ENCODE measurements at regions of chr10 and their contacts with region 1.

Region 1: DNA sequence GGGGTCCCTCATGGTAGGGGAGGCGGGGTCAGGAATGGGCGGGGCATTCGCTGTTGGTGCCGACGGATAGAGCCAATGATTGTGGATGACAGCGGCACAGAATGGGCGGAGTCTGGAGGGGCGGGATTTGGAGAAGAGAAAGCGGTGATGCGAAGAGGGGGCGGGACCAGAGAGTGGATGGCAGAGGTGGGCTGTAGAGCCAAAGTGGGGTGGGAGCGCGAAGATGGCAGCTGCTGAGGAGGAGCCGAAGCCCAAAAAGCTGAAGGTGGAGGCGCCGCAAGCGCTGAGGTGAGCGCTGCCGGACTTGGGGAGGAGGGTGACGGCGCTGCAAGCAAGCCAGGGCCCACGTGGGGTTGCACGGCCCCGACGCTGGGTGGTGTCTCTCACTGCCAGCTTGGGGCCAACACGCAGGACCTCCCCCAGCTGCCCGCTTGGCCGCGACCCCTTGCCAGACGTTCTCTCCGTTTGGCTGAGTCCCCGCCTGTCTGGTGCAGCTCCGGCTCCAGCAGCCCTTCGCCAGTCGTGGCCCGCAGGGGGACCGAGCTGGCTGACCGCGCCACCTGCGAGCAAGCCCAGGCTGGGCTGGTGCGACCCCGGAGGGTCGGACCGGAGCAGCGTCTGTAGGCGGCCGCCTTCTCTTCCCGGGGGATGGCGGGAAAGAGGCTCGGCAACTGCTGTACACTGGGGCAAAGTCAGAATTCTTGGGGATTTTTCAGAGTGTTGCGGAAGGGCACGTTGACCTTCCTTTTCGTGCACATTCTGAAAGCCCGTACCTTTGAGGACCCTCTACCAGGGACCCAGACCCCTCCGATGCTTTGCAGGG is at the start of gene ADK:
- DNase-seq: peak; percentile 98 to 100 (median 100)
- ATAC-seq: peak; percentile 95
- H3K4me3 ChIP-seq: peak within 1 kb of the TSS; percentile 68
- H3K4me3 Mint-ChIP-seq: no peak within 1 kb of the TSS
- H3K27ac ChIP-seq: peak within 1 kb of the TSS; percentile 77 to 95
- H3K27ac Mint-ChIP-seq: peak within 1 kb of the TSS; percentile 70
- H3K4me1 ChIP-seq: peaks cover 26% of the 10 kb centered on the region
- H3K4me1 Mint-ChIP-seq: peaks cover 44% of the 10 kb centered on the region
- H3K27me3 ChIP-seq: no peaks in the 10 kb centered on the region
- H3K27me3 Mint-ChIP-seq: no peaks in the 10 kb centered on the region
- CTCF ChIP-seq: peak; percentile 42
- total RNA-seq, gene ADK: 15.3 to 17.6 TPM

Region 2: DNA sequence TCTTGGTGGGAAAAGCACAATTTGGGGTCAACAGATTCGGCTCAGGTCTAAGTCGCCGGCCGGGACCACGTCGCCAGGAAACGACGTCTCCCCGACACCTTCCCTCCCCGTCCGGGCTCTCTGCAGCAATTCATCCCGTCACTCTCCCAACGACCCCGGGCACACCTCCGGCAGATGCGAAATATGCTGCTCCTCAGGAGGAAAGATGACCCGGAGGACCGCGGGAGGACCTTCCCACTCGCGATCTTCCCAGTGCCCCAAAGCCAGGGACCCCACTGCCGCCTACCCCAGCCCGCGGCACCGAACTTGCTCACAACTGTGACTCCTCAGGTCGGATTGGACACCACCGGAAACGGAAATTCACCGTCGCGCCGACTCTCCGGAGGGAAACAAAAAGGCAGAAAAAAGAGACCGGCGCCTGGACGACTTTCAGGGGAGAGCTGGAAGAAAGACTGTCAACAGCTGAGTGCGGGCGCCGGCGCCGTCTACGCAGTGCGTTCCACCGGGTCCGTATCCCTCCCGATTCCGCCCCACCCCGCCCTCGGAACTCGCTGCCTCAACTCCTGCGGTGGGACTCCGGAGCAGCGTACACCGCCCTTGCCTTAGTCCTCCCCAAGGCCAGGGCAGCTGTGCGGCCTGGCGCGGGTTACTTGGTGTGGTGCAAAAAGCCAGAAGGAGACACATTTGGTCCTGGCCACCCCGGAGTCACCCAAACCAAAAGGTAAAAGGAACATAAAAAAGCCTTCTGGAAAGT is 420.9 kb before region 1 on chr10:
- CTCF ChIA-PET with region 1: no interaction called
- POLR2A ChIA-PET with region 1: no interaction called
- intact Hi-C with region 1: loop called in 1 of 2 experiments (anchors 10 kb)
- DNase-seq: peak; percentile 78 to 94 (median 90)
- ATAC-seq: peak; percentile 90
- H3K4me3 ChIP-seq: peak overlapping the region; percentile 87
- H3K4me3 Mint-ChIP-seq: peak overlapping the region; percentile 98
- H3K27ac ChIP-seq: peak overlapping the region; percentile 77 to 86
- H3K27ac Mint-ChIP-seq: peak overlapping the region; percentile 94
- H3K4me1 ChIP-seq: peaks cover 27% of the 10 kb centered on the region
- H3K4me1 Mint-ChIP-seq: peaks cover 31% of the 10 kb centered on the region
- H3K27me3 ChIP-seq: no peaks in the 10 kb centered on the region
- H3K27me3 Mint-ChIP-seq: no peaks in the 10 kb centered on the region
- CTCF ChIP-seq: no peak

Region 3: DNA sequence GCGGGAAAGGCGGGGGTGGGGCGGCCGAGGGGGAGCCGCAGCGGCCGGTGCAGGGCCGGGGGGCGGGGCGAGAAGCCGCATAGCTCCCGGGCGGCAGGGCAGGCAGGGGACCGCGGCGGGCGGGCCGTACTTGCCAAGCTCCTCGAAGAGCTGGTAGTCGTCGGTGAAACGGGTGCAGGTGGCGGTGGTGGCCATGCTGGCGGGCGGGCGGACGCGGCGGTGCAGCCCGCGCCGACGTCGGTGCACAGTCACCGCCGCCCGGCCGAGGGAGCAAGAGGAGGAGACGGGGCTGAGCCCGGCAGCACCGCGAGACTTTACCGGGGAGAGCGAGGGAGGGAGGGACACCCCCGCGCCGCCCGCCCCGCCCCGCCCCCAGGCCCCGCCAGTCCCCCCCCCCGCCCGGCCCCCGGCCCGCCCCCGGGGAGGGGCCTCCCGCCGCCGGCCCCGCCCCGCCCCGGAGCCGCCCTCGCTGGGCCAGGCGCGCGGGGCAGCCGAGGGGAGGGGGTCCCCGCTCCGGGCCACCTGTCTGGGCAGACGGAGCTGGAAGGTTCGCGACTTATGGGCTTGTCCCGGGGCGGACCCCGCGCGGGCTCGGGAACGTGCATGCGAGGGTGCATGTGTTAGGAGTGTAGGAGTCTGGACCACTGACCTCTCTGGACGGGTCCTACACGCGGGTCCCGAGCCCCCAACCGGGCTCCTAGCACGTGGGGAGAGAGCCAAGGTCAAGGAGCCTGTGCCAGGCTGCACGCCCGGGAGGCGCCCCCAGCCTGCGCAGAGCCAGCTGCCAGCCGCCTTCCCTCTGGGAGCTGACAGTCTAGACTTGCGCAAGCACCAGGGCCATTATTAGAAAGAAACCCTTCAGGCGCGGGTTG is 276.8 kb before region 1 on chr10 and contains the start of gene CAMK2G:
- CTCF ChIA-PET with region 1: no interaction called
- POLR2A ChIA-PET with region 1: interaction called, 4 read pairs
- intact Hi-C with region 1: loop called in 1 of 2 experiments (anchors 5 kb)
- DNase-seq: peak; percentile 66 to 94 (median 81)
- ATAC-seq: peak; percentile 76
- H3K4me3 ChIP-seq: peak within 1 kb of the TSS; percentile 95
- H3K4me3 Mint-ChIP-seq: peak within 1 kb of the TSS; percentile 91
- H3K27ac ChIP-seq: peak within 1 kb of the TSS; percentile 79 to 84
- H3K27ac Mint-ChIP-seq: peak within 1 kb of the TSS; percentile 94
- H3K4me1 ChIP-seq: peaks cover 67% of the 10 kb centered on the region
- H3K4me1 Mint-ChIP-seq: peaks cover 56% of the 10 kb centered on the region
- H3K27me3 ChIP-seq: no peaks in the 10 kb centered on the region
- H3K27me3 Mint-ChIP-seq: no peaks in the 10 kb centered on the region
- CTCF ChIP-seq: no peak
- total RNA-seq, gene CAMK2G: 34.4 to 38.4 TPM

Region 4: DNA sequence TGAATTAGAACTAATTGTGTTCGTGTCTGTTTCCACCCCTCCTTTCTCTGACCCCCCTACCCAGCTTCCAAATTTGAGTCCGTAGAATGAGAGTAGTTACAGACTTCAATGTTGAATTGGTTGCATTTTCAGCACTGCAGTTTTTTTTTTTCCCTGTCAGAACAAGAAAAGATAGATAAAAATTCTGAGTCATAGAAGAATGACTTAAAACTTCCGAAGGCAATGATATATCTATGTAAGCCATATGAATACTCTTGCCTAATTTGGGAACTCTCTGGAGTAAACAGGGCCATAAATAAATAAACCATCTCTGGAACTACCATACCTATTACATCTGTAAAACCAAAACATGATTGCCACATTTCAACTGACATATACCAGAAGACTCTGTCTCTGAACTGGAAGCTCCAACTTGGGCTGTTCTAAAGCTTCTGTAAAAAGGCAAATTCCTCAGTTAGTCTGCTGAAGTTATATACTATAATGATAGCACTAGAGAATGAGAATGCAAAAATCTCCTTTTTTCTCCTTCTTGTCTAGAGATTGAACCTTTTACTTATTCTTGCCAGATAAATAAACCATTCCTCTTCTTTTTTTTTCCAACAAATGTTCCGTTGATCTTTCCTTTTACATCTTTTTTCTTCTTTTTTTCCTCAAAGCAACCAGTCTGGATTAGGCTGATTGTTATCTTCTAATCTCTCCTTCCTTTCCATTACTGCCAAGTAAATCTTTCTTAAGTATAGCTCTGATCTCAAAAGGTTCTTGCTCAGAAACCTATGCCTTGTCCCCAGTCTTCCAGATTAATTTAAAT is 129.8 kb before region 1 on chr10:
- CTCF ChIA-PET with region 1: no interaction called
- POLR2A ChIA-PET with region 1: no interaction called
- intact Hi-C with region 1: no loop called
- DNase-seq: no peak
- ATAC-seq: no peak
- H3K4me3 ChIP-seq: no peak overlapping the region
- H3K4me3 Mint-ChIP-seq: no peak overlapping the region
- H3K27ac ChIP-seq: no peak overlapping the region
- H3K27ac Mint-ChIP-seq: peak overlapping the region; percentile 25
- H3K4me1 ChIP-seq: peaks cover 3% of the 10 kb centered on the region
- H3K4me1 Mint-ChIP-seq: peaks cover 52% of the 10 kb centered on the region
- H3K27me3 ChIP-seq: no peaks in the 10 kb centered on the region
- H3K27me3 Mint-ChIP-seq: no peaks in the 10 kb centered on the region
- CTCF ChIP-seq: no peak

Region 5: DNA sequence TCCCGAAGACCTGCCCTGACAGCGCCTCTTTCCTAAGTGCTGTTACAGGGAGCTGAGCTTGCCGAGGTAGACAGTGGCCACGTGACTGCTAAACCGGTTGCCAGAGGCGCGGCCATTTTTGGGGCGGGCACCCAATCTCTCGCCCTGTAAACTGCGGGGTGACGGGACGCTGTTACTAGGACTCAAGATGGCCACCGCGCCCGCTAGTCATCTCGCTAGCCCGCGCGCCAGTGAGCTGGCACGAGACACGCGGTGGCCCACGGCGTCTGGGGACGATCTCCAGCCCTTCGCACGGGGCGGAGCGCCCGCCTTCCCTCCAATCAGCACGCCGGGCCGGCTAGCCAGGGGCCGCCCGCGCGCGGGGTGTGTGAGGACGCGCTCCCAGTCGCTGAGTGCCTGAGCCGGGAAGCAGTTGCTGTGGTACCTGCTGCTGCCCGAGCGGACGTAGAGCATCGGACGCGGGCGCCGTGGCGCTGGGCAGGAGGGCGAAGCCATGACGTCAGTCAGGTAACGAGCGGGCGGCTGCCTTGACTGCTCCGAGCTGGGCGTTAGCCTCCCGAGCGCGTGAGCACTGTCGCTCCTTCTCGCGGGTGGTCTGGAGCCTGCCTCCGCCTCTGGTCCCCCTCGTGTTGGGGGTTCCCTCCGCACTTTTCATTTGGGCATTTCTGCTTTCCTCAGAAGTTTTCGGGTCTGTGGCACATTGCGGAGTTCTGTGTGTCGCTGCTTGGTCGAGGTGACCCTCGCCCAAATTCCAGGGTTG is 25.3 kb after region 1 on chr10:
- CTCF ChIA-PET with region 1: interaction called, 6 read pairs
- POLR2A ChIA-PET with region 1: interaction called, 58 read pairs
- intact Hi-C with region 1: loop called (anchors 1 kb)
- DNase-seq: peak; percentile 91 to 99 (median 94)
- ATAC-seq: peak; percentile 95
- H3K4me3 ChIP-seq: peak overlapping the region; percentile 84
- H3K4me3 Mint-ChIP-seq: peak overlapping the region; percentile 95
- H3K27ac ChIP-seq: peak overlapping the region; percentile 84 to 90
- H3K27ac Mint-ChIP-seq: peak overlapping the region; percentile 98
- H3K4me1 ChIP-seq: peaks cover 26% of the 10 kb centered on the region
- H3K4me1 Mint-ChIP-seq: peaks cover 47% of the 10 kb centered on the region
- H3K27me3 ChIP-seq: no peaks in the 10 kb centered on the region
- H3K27me3 Mint-ChIP-seq: no peaks in the 10 kb centered on the region
- CTCF ChIP-seq: no peak

Region 6: DNA sequence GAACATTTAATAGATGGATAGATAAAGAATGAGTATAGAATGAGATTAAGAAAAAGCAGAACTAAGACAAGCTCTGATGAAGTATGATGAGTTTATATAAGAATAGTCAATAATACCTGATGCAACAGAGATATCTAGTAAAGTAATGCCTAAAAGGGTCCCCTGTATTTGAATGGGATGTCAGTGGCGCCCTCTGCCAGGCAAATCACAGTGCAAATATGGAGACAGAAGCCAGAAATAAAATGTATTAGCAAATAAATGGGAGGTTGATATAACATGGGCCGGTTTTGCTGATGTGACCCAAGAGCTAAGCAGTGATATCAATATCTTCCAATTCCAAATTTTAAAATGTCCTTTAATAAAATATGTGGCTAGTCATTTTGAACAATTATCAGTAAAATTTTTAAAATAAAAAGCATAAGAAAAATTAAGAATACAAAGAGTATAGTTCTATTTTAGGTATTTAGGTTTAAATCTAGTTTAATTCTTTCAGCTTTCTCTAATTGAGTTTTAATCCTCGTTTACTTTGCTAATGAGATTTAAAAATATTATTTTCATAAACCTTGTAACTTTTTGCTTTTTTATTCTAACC is 62.4 kb after region 1 on chr10:
- CTCF ChIA-PET with region 1: interaction called, 11 read pairs
- POLR2A ChIA-PET with region 1: interaction called, 13 read pairs
- intact Hi-C with region 1: loop called (anchors 2 to 5 kb)
- DNase-seq: peak; percentile 19 to 74 (median 54)
- ATAC-seq: peak; percentile 74
- H3K4me3 ChIP-seq: no peak overlapping the region
- H3K4me3 Mint-ChIP-seq: no peak overlapping the region
- H3K27ac ChIP-seq: no peak overlapping the region
- H3K27ac Mint-ChIP-seq: no peak overlapping the region
- H3K4me1 ChIP-seq: no peaks in the 10 kb centered on the region
- H3K4me1 Mint-ChIP-seq: peaks cover 15% of the 10 kb centered on the region
- H3K27me3 ChIP-seq: no peaks in the 10 kb centered on the region
- H3K27me3 Mint-ChIP-seq: no peaks in the 10 kb centered on the region
- CTCF ChIP-seq: peak; percentile 69

Region 7: GRCh38 chr10:74234569-74234968 is 83.3 kb after region 1 on chr10:
- CTCF ChIA-PET with region 1: interaction called, 8 read pairs
- POLR2A ChIA-PET with region 1: interaction called, 13 read pairs
- intact Hi-C with region 1: loop called (anchors 5 kb)
- DNase-seq: peak in 2 of 14 experiments; percentile 16 to 35
- ATAC-seq: no peak
- H3K4me3 ChIP-seq: no peak overlapping the region
- H3K4me3 Mint-ChIP-seq: no peak overlapping the region
- H3K27ac ChIP-seq: no peak overlapping the region
- H3K27ac Mint-ChIP-seq: no peak overlapping the region
- H3K4me1 ChIP-seq: no peaks in the 10 kb centered on the region
- H3K4me1 Mint-ChIP-seq: peaks cover 11% of the 10 kb centered on the region
- H3K27me3 ChIP-seq: no peaks in the 10 kb centered on the region
- H3K27me3 Mint-ChIP-seq: no peaks in the 10 kb centered on the region
- CTCF ChIP-seq: peak; percentile 66

Region 8: GRCh38 chr10:75210282-75211006 is 1059.2 kb after region 1 on chr10 and contains the start of gene VDAC2:
- CTCF ChIA-PET with region 1: no interaction called
- POLR2A ChIA-PET with region 1: interaction called, 20 read pairs
- intact Hi-C with region 1: loop called in 1 of 2 experiments (anchors 5 kb)
- DNase-seq: peak; percentile 91 to 98 (median 94)
- ATAC-seq: peak; percentile 81
- H3K4me3 ChIP-seq: peak within 1 kb of the TSS; percentile 73
- H3K4me3 Mint-ChIP-seq: peak within 1 kb of the TSS; percentile 97
- H3K27ac ChIP-seq: peak within 1 kb of the TSS; percentile 99
- H3K27ac Mint-ChIP-seq: peak within 1 kb of the TSS; percentile 99
- H3K4me1 ChIP-seq: peaks cover 28% of the 10 kb centered on the region
- H3K4me1 Mint-ChIP-seq: peaks cover 28% of the 10 kb centered on the region
- H3K27me3 ChIP-seq: no peaks in the 10 kb centered on the region
- H3K27me3 Mint-ChIP-seq: no peaks in the 10 kb centered on the region
- CTCF ChIP-seq: no peak
- total RNA-seq, gene VDAC2: 141 to 147 TPM

Measured in CD4-positive, alpha-beta T cell (primary cell).